CD4-positive, alpha-beta T cell (primary cell): ENCODE measurements at regions of chr19 and their contacts with region 1.

Region 1: DNA sequence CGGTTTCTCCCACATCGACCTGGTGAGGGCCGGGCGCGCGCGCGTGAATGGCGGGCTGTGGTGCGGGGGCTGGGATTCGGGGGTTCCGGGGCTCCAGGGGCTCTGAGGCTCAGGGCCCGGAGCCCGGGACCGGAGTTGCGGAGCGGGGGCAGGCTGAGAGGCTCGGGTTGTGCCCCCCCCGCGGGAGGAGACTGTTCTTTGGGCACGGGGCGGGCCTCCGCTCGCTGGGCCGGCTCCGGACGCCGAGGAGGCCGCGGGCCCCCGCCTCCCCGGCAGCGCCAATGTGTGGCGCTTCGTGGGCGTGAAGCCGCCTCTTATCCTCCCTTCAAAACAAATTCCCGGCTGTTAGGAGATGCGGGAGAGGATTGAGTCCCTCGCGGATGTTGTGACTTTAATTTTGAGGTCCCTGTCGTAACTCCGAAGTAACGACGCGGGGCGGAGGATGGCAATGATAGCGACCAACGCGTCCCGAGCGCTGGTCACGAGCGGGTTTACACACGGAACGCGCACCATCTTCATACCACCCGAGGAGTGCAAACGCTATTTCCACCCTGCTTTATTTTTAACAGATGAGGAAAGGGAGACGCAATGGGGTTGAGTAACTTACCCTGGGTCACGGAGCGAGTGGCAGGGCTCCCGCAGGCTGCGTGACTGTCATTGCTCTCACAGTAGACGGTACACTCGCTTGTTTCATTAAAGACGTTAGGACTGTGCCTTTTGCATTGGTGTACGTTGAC is 536 bp downstream of the UBA2 start:
- DNase-seq: peak in 8 of 14 experiments; percentile 1 to 64 (median 22)
- ATAC-seq: peak; percentile 37
- H3K4me3 ChIP-seq: peak overlapping the region; percentile 88
- H3K4me3 Mint-ChIP-seq: peak overlapping the region; percentile 99
- H3K27ac ChIP-seq: peak overlapping the region; percentile 66 to 91
- H3K27ac Mint-ChIP-seq: peak overlapping the region; percentile 95
- H3K4me1 ChIP-seq: peaks cover 27% of the 10 kb centered on the region
- H3K4me1 Mint-ChIP-seq: peaks cover 41% of the 10 kb centered on the region
- H3K27me3 ChIP-seq: no peaks in the 10 kb centered on the region
- H3K27me3 Mint-ChIP-seq: no peaks in the 10 kb centered on the region
- CTCF ChIP-seq: no peak

Region 2: GRCh38 chr19:33778089-33778791 is 650.5 kb before region 1 on chr19:
- CTCF ChIA-PET with region 1: no interaction called
- POLR2A ChIA-PET with region 1: no interaction called
- intact Hi-C with region 1: loop called in 1 of 2 experiments (anchors 10 kb)
- DNase-seq: peak; percentile 69 to 92 (median 81)
- ATAC-seq: peak; percentile 97
- H3K4me3 ChIP-seq: no peak overlapping the region
- H3K4me3 Mint-ChIP-seq: no peak overlapping the region
- H3K27ac ChIP-seq: no peak overlapping the region
- H3K27ac Mint-ChIP-seq: no peak overlapping the region
- H3K4me1 ChIP-seq: peaks cover 31% of the 10 kb centered on the region
- H3K4me1 Mint-ChIP-seq: peaks cover 18% of the 10 kb centered on the region
- H3K27me3 ChIP-seq: peaks cover 8 to 19% of the 10 kb centered on the region in 2 experiments
- H3K27me3 Mint-ChIP-seq: peaks cover 36% of the 10 kb centered on the region
- CTCF ChIP-seq: peak; percentile 100

Region 3: GRCh38 chr19:34171877-34172660 is 256.6 kb before region 1 on chr19 and contains the start of gene LSM14A:
- CTCF ChIA-PET with region 1: no interaction called
- POLR2A ChIA-PET with region 1: interaction called, 12 read pairs
- intact Hi-C with region 1: loop called in 1 of 2 experiments (anchors 2 kb)
- DNase-seq: peak; percentile 84 to 97 (median 91)
- ATAC-seq: peak; percentile 85
- H3K4me3 ChIP-seq: peak within 1 kb of the TSS; percentile 95
- H3K4me3 Mint-ChIP-seq: peak within 1 kb of the TSS; percentile 99
- H3K27ac ChIP-seq: peak within 1 kb of the TSS; percentile 97 to 98
- H3K27ac Mint-ChIP-seq: peak within 1 kb of the TSS; percentile 97
- H3K4me1 ChIP-seq: peaks cover 40% of the 10 kb centered on the region
- H3K4me1 Mint-ChIP-seq: peaks cover 50% of the 10 kb centered on the region
- H3K27me3 ChIP-seq: no peaks in the 10 kb centered on the region
- H3K27me3 Mint-ChIP-seq: no peaks in the 10 kb centered on the region
- CTCF ChIP-seq: no peak
- total RNA-seq, gene LSM14A: 210 to 217 TPM

Region 4: GRCh38 chr19:34351382-34351826 is 77.3 kb before region 1 on chr19:
- CTCF ChIA-PET with region 1: interaction called, 4 read pairs
- POLR2A ChIA-PET with region 1: no interaction called
- intact Hi-C with region 1: loop called (anchors 2 kb)
- DNase-seq: peak in 7 of 14 experiments; percentile 10 to 43 (median 33)
- ATAC-seq: no peak
- H3K4me3 ChIP-seq: no peak overlapping the region
- H3K4me3 Mint-ChIP-seq: no peak overlapping the region
- H3K27ac ChIP-seq: peak overlapping the region in 1 of 2 donors; percentile 29
- H3K27ac Mint-ChIP-seq: peak overlapping the region; percentile 62
- H3K4me1 ChIP-seq: peaks cover 33% of the 10 kb centered on the region
- H3K4me1 Mint-ChIP-seq: peaks cover 20% of the 10 kb centered on the region
- H3K27me3 ChIP-seq: no peaks in the 10 kb centered on the region
- H3K27me3 Mint-ChIP-seq: no peaks in the 10 kb centered on the region
- CTCF ChIP-seq: no peak

Region 5: DNA sequence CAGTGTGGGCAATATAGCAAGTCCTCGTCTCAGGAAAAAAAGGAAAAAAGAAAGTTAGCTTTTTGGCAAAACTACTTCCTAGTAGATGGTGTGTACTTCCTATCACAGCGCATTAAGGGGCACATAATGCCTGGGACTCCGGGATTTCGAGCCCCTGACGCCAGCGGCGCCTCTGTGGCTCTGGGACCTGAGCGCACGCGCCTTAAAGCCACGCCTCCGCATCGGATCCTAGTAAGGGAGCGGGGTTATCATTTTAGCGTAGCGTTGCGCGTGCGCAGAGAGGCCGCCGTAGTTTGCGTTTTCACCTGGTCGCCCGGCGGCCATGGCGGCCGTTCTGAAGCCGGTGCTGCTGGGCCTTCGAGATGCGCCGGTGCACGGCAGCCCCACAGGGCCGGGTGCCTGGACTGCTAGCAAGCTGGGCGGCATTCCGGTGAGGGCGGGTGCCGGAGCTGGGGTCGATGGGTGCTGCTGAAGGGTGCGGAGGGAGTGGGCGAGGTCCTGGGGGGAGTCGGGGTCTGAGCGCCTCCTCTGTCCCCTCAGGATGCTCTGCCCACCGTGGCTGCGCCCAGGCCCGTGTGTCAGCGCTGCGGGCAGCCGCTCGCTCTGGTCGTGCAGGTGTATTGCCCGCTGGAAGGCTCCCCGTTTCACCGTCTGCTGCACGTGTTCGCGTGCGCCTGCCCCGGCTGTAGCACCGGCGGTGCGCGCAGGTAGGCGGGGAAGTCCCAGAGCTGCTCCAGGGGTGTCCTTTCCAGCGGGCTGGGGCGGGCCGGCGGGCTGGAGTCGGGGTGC is 24.4 kb before region 1 on chr19 and contains the start of gene PDCD2L:
- CTCF ChIA-PET with region 1: interaction called, 6 read pairs
- POLR2A ChIA-PET with region 1: interaction called, 30 read pairs
- intact Hi-C with region 1: loop called (anchors 1 to 2 kb)
- DNase-seq: peak; percentile 87 to 97 (median 92)
- ATAC-seq: peak; percentile 95
- H3K4me3 ChIP-seq: peak within 1 kb of the TSS; percentile 98
- H3K4me3 Mint-ChIP-seq: peak within 1 kb of the TSS; percentile 95
- H3K27ac ChIP-seq: peak within 1 kb of the TSS; percentile 34 to 72
- H3K27ac Mint-ChIP-seq: peak within 1 kb of the TSS; percentile 86
- H3K4me1 ChIP-seq: peaks cover 10% of the 10 kb centered on the region
- H3K4me1 Mint-ChIP-seq: peaks cover 25% of the 10 kb centered on the region
- H3K27me3 ChIP-seq: no peaks in the 10 kb centered on the region
- H3K27me3 Mint-ChIP-seq: no peaks in the 10 kb centered on the region
- CTCF ChIP-seq: no peak
- total RNA-seq, gene PDCD2L: 3.8 to 3.9 TPM